ENCODE measurements at regions of chr15 and their contacts with region 1.

Region 1: GRCh38 chr15:96330450-96331145 is at the start of gene NR2F2:
- DNase-seq: peak; percentile 98
- H3K4me3 ChIP-seq: peak within 1 kb of the TSS; percentile 92 to 99 (median 99)
- H3K27ac ChIP-seq: peak within 1 kb of the TSS; percentile 92
- H3K4me1 ChIP-seq: peaks cover 22% of the 10 kb centered on the region
- H3K27me3 ChIP-seq: no peaks in the 10 kb centered on the region
- CTCF ChIP-seq: no peak
- POLR2A ChIP-seq: peak; percentile 99
- total RNA-seq, gene NR2F2: 153 and 182 TPM in 2 replicates

Region 2: GRCh38 chr15:94670438-94671034 is 1660.1 kb before region 1 on chr15:
- CTCF ChIA-PET with region 1: interaction called, 30 read pairs
- POLR2A ChIA-PET with region 1: interaction called, 4 read pairs
- dilution Hi-C with region 1: no loop called
- intact Hi-C with region 1: no loop called
- DNase-seq: peak; percentile 84
- H3K4me3 ChIP-seq: no peak overlapping the region
- H3K27ac ChIP-seq: peak overlapping the region; percentile 72
- H3K4me1 ChIP-seq: peaks cover 33% of the 10 kb centered on the region
- H3K27me3 ChIP-seq: no peaks in the 10 kb centered on the region
- CTCF ChIP-seq: peak; percentile 38 to 45
- POLR2A ChIP-seq: no peak

Region 3: DNA sequence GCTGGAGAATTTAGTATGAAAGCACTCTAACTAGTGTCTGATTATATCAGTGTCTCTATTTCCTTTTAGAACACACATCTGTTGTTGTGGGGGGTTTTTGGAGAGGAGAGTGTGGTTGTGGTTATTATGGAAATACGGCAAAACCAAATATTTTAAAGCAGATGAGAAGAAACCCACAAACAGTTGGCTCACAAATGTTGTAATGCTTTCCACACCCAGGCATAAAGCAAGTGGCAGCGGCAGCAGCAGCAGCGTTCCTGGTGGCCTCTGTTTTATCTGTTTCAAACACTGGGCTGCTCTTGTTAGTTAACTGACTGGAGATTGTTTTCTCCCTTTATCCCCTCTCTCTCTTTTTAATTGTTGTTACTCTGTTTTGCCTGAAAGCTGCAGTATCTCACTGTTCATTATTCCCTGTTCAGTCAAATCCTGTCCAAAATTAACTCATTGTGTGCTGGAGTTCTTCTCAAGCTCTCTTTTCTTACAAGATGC is 1045.6 kb before region 1 on chr15:
- CTCF ChIA-PET with region 1: interaction called, 16 read pairs
- POLR2A ChIA-PET with region 1: no interaction called
- dilution Hi-C with region 1: no loop called
- intact Hi-C with region 1: loop called (anchors 1 kb)
- DNase-seq: peak; percentile 88
- H3K4me3 ChIP-seq: no peak overlapping the region
- H3K27ac ChIP-seq: peak overlapping the region; percentile 15
- H3K4me1 ChIP-seq: peaks cover 63% of the 10 kb centered on the region
- H3K27me3 ChIP-seq: no peaks in the 10 kb centered on the region
- CTCF ChIP-seq: peak; percentile 21 to 28
- POLR2A ChIP-seq: no peak

Region 4: GRCh38 chr15:95557226-95558046 is 773.2 kb before region 1 on chr15:
- CTCF ChIA-PET with region 1: interaction called, 3 read pairs
- POLR2A ChIA-PET with region 1: no interaction called
- dilution Hi-C with region 1: no loop called
- intact Hi-C with region 1: loop called (anchors 1 kb)
- DNase-seq: peak; percentile 96
- H3K4me3 ChIP-seq: peak overlapping the region in 1 of 3 experiments; percentile 10
- H3K27ac ChIP-seq: peak overlapping the region; percentile 100
- H3K4me1 ChIP-seq: peaks cover 39% of the 10 kb centered on the region
- H3K27me3 ChIP-seq: no peaks in the 10 kb centered on the region
- CTCF ChIP-seq: no peak
- POLR2A ChIP-seq: no peak

Region 5: DNA sequence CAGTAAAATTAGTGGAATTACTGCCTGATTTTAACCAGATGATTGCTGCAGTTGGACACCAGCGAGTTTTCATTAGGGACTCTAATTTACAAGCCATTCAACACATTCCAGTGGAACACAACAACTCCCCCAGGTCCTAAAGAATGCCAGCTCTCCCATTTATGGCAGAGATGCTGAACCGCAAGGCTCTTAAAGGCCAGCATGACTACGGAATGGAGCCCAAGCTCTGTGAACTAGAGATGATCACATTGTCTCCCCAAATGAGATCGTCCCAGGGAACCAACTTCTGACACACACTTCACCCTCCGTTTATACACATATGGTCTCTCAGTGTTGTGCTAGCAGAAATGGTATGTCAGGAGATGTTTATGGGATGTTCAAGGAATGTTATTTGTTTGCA is 446.3 kb before region 1 on chr15:
- CTCF ChIA-PET with region 1: interaction called, 3 read pairs
- POLR2A ChIA-PET with region 1: no interaction called
- dilution Hi-C with region 1: no loop called
- intact Hi-C with region 1: loop called (anchors 5 kb)
- DNase-seq: no peak
- H3K4me3 ChIP-seq: no peak overlapping the region
- H3K27ac ChIP-seq: no peak overlapping the region
- H3K4me1 ChIP-seq: peaks cover 22% of the 10 kb centered on the region
- H3K27me3 ChIP-seq: no peaks in the 10 kb centered on the region
- CTCF ChIP-seq: no peak
- POLR2A ChIP-seq: no peak

Region 6: DNA sequence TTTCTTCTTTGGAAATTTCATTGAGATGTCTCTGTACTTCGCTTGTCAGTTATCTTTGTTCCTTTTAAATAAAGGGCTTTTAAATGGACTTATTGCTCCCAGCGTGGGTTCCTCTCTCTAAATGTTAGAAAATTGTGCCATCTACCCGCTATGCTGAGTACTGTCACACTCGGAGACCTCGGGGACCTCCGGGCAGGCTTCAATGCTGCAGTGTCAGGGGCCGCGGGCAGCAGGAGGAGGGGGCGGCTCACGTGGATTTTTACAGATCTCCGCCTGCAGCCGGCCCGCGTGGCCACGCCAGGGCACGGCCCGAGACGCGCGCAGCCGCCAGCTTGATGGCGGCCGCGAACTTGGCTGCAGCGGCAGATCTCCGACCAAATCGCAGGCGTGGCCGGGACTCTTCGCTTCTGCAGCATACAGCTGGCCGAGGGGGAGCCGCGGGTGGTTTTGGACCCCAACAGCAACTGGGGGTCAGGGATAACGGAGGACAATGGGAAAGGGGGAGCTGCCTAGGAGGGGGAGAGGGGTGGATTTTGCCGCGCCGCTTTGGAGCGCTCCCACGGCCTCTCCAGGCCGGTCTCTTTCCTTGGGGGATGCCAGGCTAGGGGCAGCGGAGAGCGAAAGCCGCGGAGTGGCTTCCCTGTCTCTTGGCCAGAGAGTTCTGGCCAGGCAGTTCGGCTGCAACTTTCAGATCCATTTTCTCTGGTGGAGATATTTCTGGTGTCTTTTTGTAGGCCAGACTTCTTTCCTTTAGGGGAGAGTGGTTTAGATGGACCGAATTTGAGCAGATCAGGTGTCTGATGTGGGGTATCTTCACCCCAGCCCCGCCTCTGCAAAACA is 15.2 kb after region 1 on chr15:
- CTCF ChIA-PET with region 1: interaction called, 37 read pairs
- POLR2A ChIA-PET with region 1: interaction called, 15 read pairs
- dilution Hi-C with region 1: no loop called
- intact Hi-C with region 1: loop called (anchors 1 kb)
- DNase-seq: peak; percentile 86
- H3K4me3 ChIP-seq: peak overlapping the region; percentile 16 to 99 (median 74)
- H3K27ac ChIP-seq: peak overlapping the region; percentile 87
- H3K4me1 ChIP-seq: peaks cover 83% of the 10 kb centered on the region
- H3K27me3 ChIP-seq: no peaks in the 10 kb centered on the region
- CTCF ChIP-seq: peak; percentile 22 to 33
- POLR2A ChIP-seq: no peak

Region 7: DNA sequence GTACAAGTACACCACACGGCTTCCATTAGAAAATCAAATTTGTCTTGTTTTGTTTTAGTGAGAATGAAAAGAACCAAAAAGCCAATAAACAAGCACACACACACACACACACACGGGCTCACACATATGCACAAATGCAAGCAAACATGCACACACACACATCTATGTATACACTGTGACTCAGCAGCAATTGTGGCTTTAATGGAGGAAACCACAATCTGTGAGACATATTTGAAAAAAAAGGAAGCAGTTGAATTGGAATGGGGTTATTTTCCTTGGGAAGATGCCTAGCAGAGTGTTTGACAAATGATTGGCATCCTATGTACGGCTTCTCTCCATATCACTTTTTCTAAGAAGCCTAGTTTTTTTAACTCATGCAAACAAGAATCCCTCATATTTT is 1428.8 kb after region 1 on chr15:
- CTCF ChIA-PET with region 1: interaction called, 13 read pairs
- POLR2A ChIA-PET with region 1: no interaction called
- dilution Hi-C with region 1: no loop called
- intact Hi-C with region 1: loop called (anchors 1 kb)
- DNase-seq: peak; percentile 62
- H3K4me3 ChIP-seq: no peak overlapping the region
- H3K27ac ChIP-seq: no peak overlapping the region
- H3K4me1 ChIP-seq: peaks cover 4% of the 10 kb centered on the region
- H3K27me3 ChIP-seq: peaks cover 4 to 18% of the 10 kb centered on the region in 2 experiments
- CTCF ChIP-seq: no peak
- POLR2A ChIP-seq: no peak